SK-N-SH (cell line): ENCODE measurements at regions of chr11 and their contacts with region 1.

Region 1: DNA sequence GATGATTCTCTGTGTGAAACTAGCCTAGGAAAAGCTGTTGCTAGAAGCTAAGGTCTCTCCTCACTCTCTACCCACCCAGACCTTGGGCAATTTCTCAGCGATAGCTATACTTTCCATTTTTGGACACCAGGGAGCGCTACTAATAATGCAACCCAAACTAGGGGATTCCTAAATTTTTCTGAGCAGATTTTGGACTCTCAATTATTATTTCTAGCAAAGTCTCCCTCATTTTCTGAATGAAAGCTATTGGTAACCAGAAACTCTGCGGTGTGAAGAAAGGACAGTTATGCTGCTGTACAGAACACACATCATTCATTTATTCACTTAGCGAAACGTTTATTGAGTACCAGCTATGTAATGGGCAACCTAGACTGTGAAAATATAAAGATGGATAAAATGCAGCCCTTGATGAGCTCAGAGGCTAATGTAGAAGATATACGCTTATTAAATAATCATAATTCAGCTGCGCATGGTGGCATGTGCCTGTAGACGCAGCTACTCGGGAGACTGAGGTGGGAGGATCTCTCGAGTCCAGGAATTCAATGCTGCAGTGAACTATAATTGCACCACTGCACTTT is 6.1 kb upstream of the STIM1 start:
- DNase-seq: peak; percentile 53
- H3K4me3 ChIP-seq: peak overlapping the region in 1 of 2 experiments; percentile 23; a peak in 1 of 4 replicates
- H3K27ac ChIP-seq: no peak overlapping the region
- H3K4me1 ChIP-seq: peaks cover under 1 to 3% of the 10 kb centered on the region in 2 experiments; a peak in 2 of 4 replicates
- H3K27me3 ChIP-seq: no peaks in the 10 kb centered on the region
- CTCF ChIP-seq: peak; percentile 80
- EP300 ChIP-seq: no peak
- RAD21 ChIP-seq: peak; percentile 69

Region 2: DNA sequence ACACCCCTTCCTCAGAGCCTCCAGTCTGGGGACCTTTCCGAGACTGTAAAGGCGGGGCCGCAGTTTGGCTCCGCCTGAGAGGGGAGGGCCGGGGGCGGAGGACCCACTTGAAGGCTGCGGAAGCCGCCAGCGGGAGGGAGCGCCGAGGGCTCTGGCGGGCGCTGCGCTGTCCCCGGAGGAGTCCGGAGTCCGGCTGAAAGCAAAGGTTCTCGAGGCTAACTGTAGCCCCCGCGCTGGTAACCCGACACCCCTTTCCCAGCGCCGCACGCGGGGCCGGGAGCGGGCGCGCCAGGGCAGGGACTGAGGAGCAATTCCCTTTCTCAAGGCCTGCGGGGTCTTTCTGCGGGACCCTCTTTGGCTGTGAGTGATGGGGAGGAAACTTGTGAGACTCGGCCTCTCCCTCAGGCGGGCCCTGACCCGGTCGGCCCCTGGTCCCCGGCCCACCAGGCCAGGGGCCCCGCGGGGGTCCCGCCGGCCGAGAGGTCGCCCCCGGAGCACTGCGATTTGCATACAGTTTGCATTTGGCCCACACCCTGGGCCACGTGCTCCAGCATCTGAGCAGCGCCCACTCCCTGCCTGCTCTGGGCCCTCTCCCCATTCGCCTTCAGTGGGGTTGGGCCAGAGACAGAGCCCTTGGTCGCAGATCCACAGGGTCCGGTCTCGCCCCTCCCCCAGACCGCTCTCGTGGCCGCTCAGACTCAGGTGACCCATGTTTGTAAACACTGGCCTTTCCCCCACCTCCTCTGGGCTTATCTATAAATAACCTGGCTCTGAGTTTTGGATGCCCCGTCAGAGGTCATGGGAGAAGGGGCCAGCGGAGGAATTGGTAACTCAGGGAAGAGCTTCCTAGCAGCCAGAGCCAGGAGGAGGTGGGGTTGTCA is 207.1 kb before region 1 on chr11:
- CTCF ChIA-PET with region 1: no interaction called
- POLR2A ChIA-PET with region 1: no interaction called
- DNase-seq: peak; percentile 98
- H3K4me3 ChIP-seq: peak overlapping the region; percentile 57 to 65
- H3K27ac ChIP-seq: no peak overlapping the region
- H3K4me1 ChIP-seq: peaks cover 0 to 8% of the 10 kb centered on the region in 2 experiments; a peak in 1 of 4 replicates
- H3K27me3 ChIP-seq: no peaks in the 10 kb centered on the region; the same call in 1 of the 2 replicates
- CTCF ChIP-seq: no peak
- EP300 ChIP-seq: no peak
- RAD21 ChIP-seq: no peak

Region 3: GRCh38 chr11:4064278-4064955 is 215.0 kb after region 1 on chr11:
- CTCF ChIA-PET with region 1: interaction called, 636 read pairs
- POLR2A ChIA-PET with region 1: no interaction called
- DNase-seq: no peak
- H3K4me3 ChIP-seq: no peak overlapping the region
- H3K27ac ChIP-seq: no peak overlapping the region
- H3K4me1 ChIP-seq: peaks cover 5 to 22% of the 10 kb centered on the region in 2 experiments; a peak in 3 of 4 replicates
- H3K27me3 ChIP-seq: no peaks in the 10 kb centered on the region
- CTCF ChIP-seq: no peak
- EP300 ChIP-seq: no peak
- RAD21 ChIP-seq: no peak; the same call in 1 of the 2 replicates

Region 4: DNA sequence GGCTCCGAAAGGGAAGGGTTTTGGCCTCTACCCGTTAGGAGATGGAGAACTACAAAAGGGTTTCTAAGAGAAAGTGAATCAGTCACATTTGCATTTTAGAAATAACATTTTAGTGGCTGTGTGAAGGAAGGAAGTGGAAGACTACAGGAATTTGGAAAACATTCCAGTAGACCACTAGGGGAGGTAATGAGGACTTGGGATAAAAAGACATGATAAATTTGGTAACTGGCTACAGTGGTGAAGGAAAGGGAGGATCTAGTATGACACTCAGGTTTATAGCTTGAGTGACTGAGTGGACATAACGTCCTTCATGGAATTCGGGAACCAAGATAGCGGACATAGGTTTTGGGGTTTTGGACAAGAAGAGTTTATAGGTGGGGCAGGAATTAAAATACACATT is 238.2 kb after region 1 on chr11:
- CTCF ChIA-PET with region 1: interaction called, 16 read pairs
- POLR2A ChIA-PET with region 1: no interaction called
- DNase-seq: no peak
- H3K4me3 ChIP-seq: no peak overlapping the region
- H3K27ac ChIP-seq: no peak overlapping the region
- H3K4me1 ChIP-seq: no peaks in the 10 kb centered on the region
- H3K27me3 ChIP-seq: no peaks in the 10 kb centered on the region
- CTCF ChIP-seq: peak; percentile 41
- EP300 ChIP-seq: no peak
- RAD21 ChIP-seq: no peak